GM13977 (cell line): ENCODE measurements at regions of chr11 and their contacts with region 1.

Region 1: GRCh38 chr11:63974259-63975143 is at the start of gene COX8A:
- DNase-seq: peak; percentile 99
- CTCF ChIP-seq: peak; percentile 26

Region 2: GRCh38 chr11:63729326-63729725 is 245.2 kb before region 1 on chr11:
- in situ Hi-C with region 1: no loop called
- DNase-seq: no peak
- CTCF ChIP-seq: no peak

Region 3: DNA sequence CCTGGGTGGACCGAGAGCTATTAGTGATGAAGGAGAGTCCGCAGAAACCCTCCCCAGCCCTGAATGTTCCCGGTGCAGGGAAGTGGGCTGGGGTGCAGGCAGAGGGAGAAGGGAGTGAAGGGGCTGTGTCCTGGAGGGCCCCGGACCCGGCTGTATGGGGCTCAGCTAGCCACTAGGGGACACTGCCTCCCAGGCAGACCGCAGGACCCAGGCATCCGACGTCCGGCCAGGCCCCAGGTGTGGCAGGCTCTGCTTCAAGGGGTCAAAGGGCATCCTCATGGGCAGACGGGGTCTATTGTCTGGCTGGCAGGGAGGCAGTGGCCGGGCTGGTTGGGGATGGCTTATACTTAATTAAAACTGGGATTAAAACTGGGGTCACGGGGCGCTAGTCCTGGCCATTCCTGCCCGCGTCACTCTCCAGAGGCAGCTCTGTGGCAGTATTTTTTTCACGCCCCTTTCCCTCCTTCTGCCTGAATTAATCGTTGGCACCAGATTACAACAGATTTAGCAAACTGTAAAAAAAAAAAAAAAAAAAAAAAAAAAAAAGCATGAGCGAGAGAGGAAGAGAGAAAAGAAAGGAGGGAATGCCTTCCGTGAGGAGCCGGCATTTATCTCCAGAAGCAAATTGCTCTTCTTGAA is 66.3 kb after region 1 on chr11:
- in situ Hi-C with region 1: no loop called
- DNase-seq: no peak
- CTCF ChIP-seq: peak; percentile 37

Region 4: GRCh38 chr11:64078284-64078683 is 103.8 kb after region 1 on chr11:
- in situ Hi-C with region 1: no loop called
- DNase-seq: no peak
- CTCF ChIP-seq: no peak

Region 5: GRCh38 chr11:64165849-64166635 is 191.5 kb after region 1 on chr11 and contains the start of gene MACROD1:
- in situ Hi-C with region 1: loop called (anchors 25 kb)
- DNase-seq: peak; percentile 91
- CTCF ChIP-seq: no peak

Region 6: GRCh38 chr11:64225612-64226506 is 251.4 kb after region 1 on chr11 and contains the starts of genes NUDT22 and TRPT1:
- in situ Hi-C with region 1: no loop called
- DNase-seq: peak; percentile 95
- CTCF ChIP-seq: peak; percentile 29